Caco-2 (cell line): ENCODE measurements at regions of chr7 and their contacts with region 1.

Region 1: DNA sequence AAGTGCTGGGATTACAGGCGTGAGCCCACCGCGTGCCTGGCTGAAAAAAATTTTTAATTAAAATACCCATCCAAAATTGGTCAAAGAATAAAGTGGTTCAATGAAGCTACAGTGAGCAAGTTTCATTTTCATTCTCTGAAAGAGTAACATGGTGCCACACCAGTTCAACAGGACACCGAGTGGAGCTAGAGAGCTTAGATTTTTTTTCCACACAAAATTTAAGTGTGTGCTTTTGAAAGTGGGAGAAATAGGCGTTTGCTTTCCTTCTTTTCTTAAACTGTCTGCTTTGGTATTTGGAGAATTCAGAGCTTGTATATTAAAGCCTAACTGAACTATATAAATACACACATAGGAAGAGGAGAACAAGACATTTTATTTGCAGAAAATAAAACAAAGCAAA is 43.4 kb downstream of the BPGM start:
- DNase-seq: peak in 1 of 2 experiments; percentile 42
- H3K4me3 ChIP-seq: no peak overlapping the region
- H3K4me3 Mint-ChIP-seq: no peak overlapping the region
- H3K27ac Mint-ChIP-seq: no peak overlapping the region
- H3K4me1 ChIP-seq: peaks cover 12% of the 10 kb centered on the region
- H3K4me1 Mint-ChIP-seq: peaks cover 30% of the 10 kb centered on the region
- H3K27me3 ChIP-seq: no peaks in the 10 kb centered on the region
- H3K27me3 Mint-ChIP-seq: no peaks in the 10 kb centered on the region
- CTCF ChIP-seq: peak; percentile 35 to 64

Region 2: GRCh38 chr7:134605973-134606923 is 83.8 kb before region 1 on chr7:
- CTCF ChIA-PET with region 1: no interaction called
- POLR2A ChIA-PET with region 1: no interaction called
- intact Hi-C with region 1: no loop called
- DNase-seq: peak; percentile 47 to 59
- H3K4me3 ChIP-seq: no peak overlapping the region
- H3K4me3 Mint-ChIP-seq: no peak overlapping the region
- H3K27ac Mint-ChIP-seq: no peak overlapping the region
- H3K4me1 ChIP-seq: peaks cover 7% of the 10 kb centered on the region; the same call in 1 of the 2 replicates
- H3K4me1 Mint-ChIP-seq: peaks cover 7% of the 10 kb centered on the region
- H3K27me3 ChIP-seq: peaks cover under 1% of the 10 kb centered on the region
- H3K27me3 Mint-ChIP-seq: peaks cover 7% of the 10 kb centered on the region
- CTCF ChIP-seq: peak; percentile 90 to 91

Region 3: DNA sequence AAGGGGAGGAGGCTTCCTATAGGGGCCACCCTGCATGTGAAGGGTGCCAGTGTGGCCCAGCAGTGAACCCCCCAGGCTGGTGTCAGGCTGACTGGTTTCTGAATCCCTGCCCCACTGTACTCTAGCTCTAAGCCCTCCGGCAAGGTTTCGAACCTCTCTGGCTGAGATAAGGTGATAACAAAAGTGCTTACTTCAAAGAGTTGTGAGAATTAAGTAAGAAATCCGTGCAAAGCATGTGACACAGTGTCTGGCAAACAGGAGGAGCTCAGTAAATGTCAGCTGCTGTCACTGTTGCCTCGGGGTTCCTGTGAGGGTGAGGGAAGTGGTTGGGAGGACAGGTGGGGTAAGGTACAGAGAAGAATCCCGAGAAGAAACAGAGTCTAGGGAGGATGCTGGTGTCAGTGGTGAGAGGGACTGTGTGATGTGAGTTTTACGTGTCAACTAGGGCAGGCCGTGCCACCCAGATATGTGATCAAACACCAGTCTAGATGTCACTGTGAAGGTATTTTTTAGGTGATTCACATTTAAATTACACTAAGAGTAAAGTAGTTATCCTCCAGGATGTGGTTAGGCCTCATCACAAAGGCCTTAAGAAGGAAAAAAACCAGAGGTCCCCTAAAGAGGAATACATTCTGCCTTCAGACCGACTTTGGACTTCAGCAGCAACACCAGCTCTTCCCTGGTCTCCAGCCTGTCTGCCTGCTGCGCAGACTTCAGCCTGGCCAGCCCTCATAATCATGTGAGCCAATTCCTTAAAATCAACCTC is 21.0 kb after region 1 on chr7:
- CTCF ChIA-PET with region 1: interaction called, 9 read pairs
- POLR2A ChIA-PET with region 1: no interaction called
- intact Hi-C with region 1: loop called (anchors 2 kb)
- DNase-seq: peak; percentile 81 to 87
- H3K4me3 ChIP-seq: no peak overlapping the region
- H3K4me3 Mint-ChIP-seq: peak overlapping the region; percentile 11
- H3K27ac Mint-ChIP-seq: peak overlapping the region; percentile 78
- H3K4me1 ChIP-seq: peaks cover 28% of the 10 kb centered on the region
- H3K4me1 Mint-ChIP-seq: peaks cover 31% of the 10 kb centered on the region
- H3K27me3 ChIP-seq: no peaks in the 10 kb centered on the region
- H3K27me3 Mint-ChIP-seq: no peaks in the 10 kb centered on the region
- CTCF ChIP-seq: no peak

Region 4: DNA sequence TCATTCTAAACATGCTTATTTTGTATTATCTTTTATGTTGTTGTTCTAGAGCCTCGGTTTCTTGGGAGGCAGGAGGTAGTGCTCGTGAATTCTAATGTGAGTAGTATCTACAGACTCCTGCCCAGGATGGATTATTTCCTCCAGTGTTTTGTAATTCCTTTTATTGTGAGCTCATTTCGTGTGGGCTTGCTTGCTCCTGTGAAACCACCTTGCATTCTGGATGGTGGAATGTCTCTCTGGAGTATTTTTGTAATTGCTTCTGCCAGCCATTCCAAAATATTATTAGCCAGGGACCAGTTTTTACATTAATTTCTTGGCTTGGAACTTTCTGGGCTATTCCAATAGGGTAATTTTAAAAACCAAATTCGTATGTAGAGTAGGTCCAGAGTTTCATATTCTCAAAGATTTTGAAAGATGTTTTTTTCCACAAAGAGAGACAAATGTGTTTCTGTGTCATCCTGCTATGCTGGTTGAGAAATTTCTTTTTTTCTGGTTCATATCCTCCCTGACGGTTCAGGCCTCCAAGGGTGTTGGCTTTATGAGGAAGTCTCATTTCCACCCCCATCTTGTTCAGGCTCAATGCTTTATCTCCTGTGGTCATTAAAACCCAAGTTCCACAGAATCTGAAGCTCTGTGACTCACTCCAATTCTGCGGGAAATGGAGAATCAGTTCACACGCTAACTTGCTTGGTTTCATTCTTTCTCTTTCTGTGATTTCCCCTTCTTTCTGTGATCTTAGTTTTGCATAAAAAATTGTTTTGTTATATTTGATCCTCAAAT is 47.7 kb after region 1 on chr7:
- CTCF ChIA-PET with region 1: no interaction called
- POLR2A ChIA-PET with region 1: no interaction called
- intact Hi-C with region 1: no loop called
- DNase-seq: no peak
- H3K4me3 ChIP-seq: no peak overlapping the region
- H3K4me3 Mint-ChIP-seq: no peak overlapping the region
- H3K27ac Mint-ChIP-seq: no peak overlapping the region
- H3K4me1 ChIP-seq: peaks cover 13% of the 10 kb centered on the region
- H3K4me1 Mint-ChIP-seq: peaks cover 10% of the 10 kb centered on the region
- H3K27me3 ChIP-seq: no peaks in the 10 kb centered on the region; the same call in 1 of the 2 replicates
- H3K27me3 Mint-ChIP-seq: no peaks in the 10 kb centered on the region
- CTCF ChIP-seq: no peak

Region 5: DNA sequence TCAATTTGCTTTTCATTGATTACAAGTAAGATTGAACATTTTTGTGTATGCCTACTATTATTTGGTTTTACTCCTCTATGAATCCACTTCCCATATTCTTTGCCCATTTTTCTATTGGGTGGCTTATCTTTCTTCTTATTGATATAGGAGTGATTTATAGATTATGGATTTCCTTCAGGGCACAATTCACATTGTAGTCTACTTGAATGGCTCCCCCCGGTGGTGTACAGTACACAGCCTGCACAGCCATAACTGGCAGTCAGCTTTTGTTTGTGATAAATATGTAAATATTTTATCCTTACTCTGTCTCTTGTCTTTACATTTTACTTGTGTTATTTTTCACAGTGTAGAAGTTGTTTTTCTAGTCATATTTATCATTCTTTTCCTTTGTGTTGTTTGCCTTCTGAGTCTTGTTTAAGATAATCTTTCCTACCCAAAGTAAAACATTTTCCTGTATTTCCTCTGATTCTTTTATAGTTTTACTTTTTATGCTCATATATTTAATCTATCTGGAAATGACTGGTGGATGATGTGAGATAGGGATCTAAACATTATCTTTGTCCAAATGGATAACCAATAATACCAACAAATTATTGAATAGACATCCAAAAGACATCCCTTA is 65.5 kb after region 1 on chr7:
- CTCF ChIA-PET with region 1: no interaction called
- POLR2A ChIA-PET with region 1: no interaction called
- intact Hi-C with region 1: loop called (anchors 1 kb)
- DNase-seq: peak; percentile 41 to 58
- H3K4me3 ChIP-seq: no peak overlapping the region
- H3K4me3 Mint-ChIP-seq: no peak overlapping the region
- H3K27ac Mint-ChIP-seq: no peak overlapping the region
- H3K4me1 ChIP-seq: peaks cover 16% of the 10 kb centered on the region
- H3K4me1 Mint-ChIP-seq: peaks cover 24% of the 10 kb centered on the region
- H3K27me3 ChIP-seq: no peaks in the 10 kb centered on the region
- H3K27me3 Mint-ChIP-seq: no peaks in the 10 kb centered on the region
- CTCF ChIP-seq: peak; percentile 54 to 55

Region 6: GRCh38 chr7:134766779-134767519 is 76.9 kb after region 1 on chr7:
- CTCF ChIA-PET with region 1: no interaction called
- POLR2A ChIA-PET with region 1: no interaction called
- intact Hi-C with region 1: no loop called
- DNase-seq: no peak
- H3K4me3 ChIP-seq: no peak overlapping the region
- H3K4me3 Mint-ChIP-seq: no peak overlapping the region
- H3K27ac Mint-ChIP-seq: peak overlapping the region; percentile 31
- H3K4me1 ChIP-seq: peaks cover 19% of the 10 kb centered on the region
- H3K4me1 Mint-ChIP-seq: peaks cover 31% of the 10 kb centered on the region
- H3K27me3 ChIP-seq: no peaks in the 10 kb centered on the region
- H3K27me3 Mint-ChIP-seq: no peaks in the 10 kb centered on the region
- CTCF ChIP-seq: no peak

Region 7: GRCh38 chr7:134891262-134891695 is 201.3 kb after region 1 on chr7:
- CTCF ChIA-PET with region 1: no interaction called
- POLR2A ChIA-PET with region 1: no interaction called
- intact Hi-C with region 1: loop called (anchors 5 kb)
- DNase-seq: peak; percentile 94 to 96
- H3K4me3 ChIP-seq: peak overlapping the region; percentile 51
- H3K4me3 Mint-ChIP-seq: peak overlapping the region; percentile 71
- H3K27ac Mint-ChIP-seq: peak overlapping the region; percentile 46
- H3K4me1 ChIP-seq: peaks cover 54% of the 10 kb centered on the region
- H3K4me1 Mint-ChIP-seq: peaks cover 44% of the 10 kb centered on the region
- H3K27me3 ChIP-seq: no peaks in the 10 kb centered on the region
- H3K27me3 Mint-ChIP-seq: no peaks in the 10 kb centered on the region
- CTCF ChIP-seq: no peak

Region 8: GRCh38 chr7:135274495-135275268 is 584.7 kb after region 1 on chr7:
- CTCF ChIA-PET with region 1: no interaction called
- POLR2A ChIA-PET with region 1: no interaction called
- intact Hi-C with region 1: loop called (anchors 10 kb)
- DNase-seq: peak; percentile 56 to 78
- H3K4me3 ChIP-seq: no peak overlapping the region
- H3K4me3 Mint-ChIP-seq: no peak overlapping the region
- H3K27ac Mint-ChIP-seq: no peak overlapping the region
- H3K4me1 ChIP-seq: no peaks in the 10 kb centered on the region
- H3K4me1 Mint-ChIP-seq: no peaks in the 10 kb centered on the region
- H3K27me3 ChIP-seq: no peaks in the 10 kb centered on the region
- H3K27me3 Mint-ChIP-seq: no peaks in the 10 kb centered on the region
- CTCF ChIP-seq: peak; percentile 65 to 92